Heart right ventricle (tissue), 16 donors: ENCODE measurements at regions of chr10 and their contacts with region 1.

Region 1: GRCh38 chr10:5873515-5873995 is 16.1 kb downstream of the ANKRD16 start:
- DNase-seq: peak; percentile 22 to 72
- ATAC-seq: peak in 7 of 8 donors; percentile 74 to 85 (median 79)
- H3K4me3 ChIP-seq: peak overlapping the region in 1 of 10 donors; percentile 25
- H3K27ac ChIP-seq: no peak overlapping the region
- H3K4me1 ChIP-seq: peaks cover 0 to 12% (median 0%) of the 10 kb centered on the region in 9 donors
- H3K27me3 ChIP-seq: no peaks in the 10 kb centered on the region
- CTCF ChIP-seq: peak; percentile 64 to 84 (median 77)

Region 2: GRCh38 chr10:5434017-5434753 is 439.4 kb before region 1 on chr10:
- intact Hi-C with region 1: loop called in 1 of 10 experiments (anchors 10 kb)
- DNase-seq: no peak
- ATAC-seq: peak in 3 of 8 donors; percentile 59 to 68 (median 61)
- H3K4me3 ChIP-seq: no peak overlapping the region
- H3K27ac ChIP-seq: no peak overlapping the region
- H3K4me1 ChIP-seq: no peaks in the 10 kb centered on the region
- H3K27me3 ChIP-seq: no peaks in the 10 kb centered on the region
- CTCF ChIP-seq: peak; percentile 26 to 79 (median 71)

Region 3: GRCh38 chr10:5446390-5446926 is 427.1 kb before region 1 on chr10:
- intact Hi-C with region 1: loop called in 6 of 10 experiments (anchors 5 to 10 kb)
- DNase-seq: peak; percentile 88 to 89
- ATAC-seq: peak; percentile 95 to 98 (median 97)
- H3K4me3 ChIP-seq: peak overlapping the region; percentile 5 to 64 (median 56)
- H3K27ac ChIP-seq: peak overlapping the region in 9 of 10 donors; percentile 42 to 77 (median 59)
- H3K4me1 ChIP-seq: peaks cover 0 to 43% (median 7%) of the 10 kb centered on the region in 9 donors
- H3K27me3 ChIP-seq: no peaks in the 10 kb centered on the region
- CTCF ChIP-seq: no peak

Region 4: GRCh38 chr10:5629303-5630111 is 244.0 kb before region 1 on chr10:
- intact Hi-C with region 1: loop called in 3 of 10 experiments (anchors 5 to 10 kb)
- DNase-seq: peak; percentile 83 to 87
- ATAC-seq: peak; percentile 77 to 86 (median 82)
- H3K4me3 ChIP-seq: no peak overlapping the region
- H3K27ac ChIP-seq: peak overlapping the region in 3 of 10 donors; percentile 35 to 48 (median 43)
- H3K4me1 ChIP-seq: peaks cover 0 to 44% (median 21%) of the 10 kb centered on the region in 9 donors
- H3K27me3 ChIP-seq: peaks cover 0 to 5% (median 0%) of the 10 kb centered on the region in 7 donors
- CTCF ChIP-seq: peak; percentile 85 to 97 (median 91)

Region 5: GRCh38 chr10:5684318-5684970 is 189.1 kb before region 1 on chr10 and contains the start of gene TASOR2:
- intact Hi-C with region 1: loop called in 7 of 10 experiments (anchors 2 to 10 kb)
- DNase-seq: peak; percentile 98 to 99
- ATAC-seq: peak; percentile 97 to 99 (median 98)
- H3K4me3 ChIP-seq: peak within 1 kb of the TSS; percentile 83 to 98 (median 93)
- H3K27ac ChIP-seq: peak within 1 kb of the TSS; percentile 82 to 97 (median 92)
- H3K4me1 ChIP-seq: peaks cover 9 to 32% (median 26%) of the 10 kb centered on the region in 9 donors
- H3K27me3 ChIP-seq: no peaks in the 10 kb centered on the region
- CTCF ChIP-seq: no peak
- total RNA-seq, gene TASOR2: 26.9 to 45.6 (median 34.6) TPM

Region 6: GRCh38 chr10:5692461-5693358 is 180.8 kb before region 1 on chr10:
- intact Hi-C with region 1: loop called in 7 of 10 experiments (anchors 5 to 10 kb)
- DNase-seq: peak; percentile 23 to 40
- ATAC-seq: peak; percentile 73 to 93 (median 88)
- H3K4me3 ChIP-seq: peak overlapping the region; percentile 27 to 64 (median 56)
- H3K27ac ChIP-seq: peak overlapping the region in 7 of 10 donors; percentile 21 to 77 (median 35)
- H3K4me1 ChIP-seq: peaks cover 0 to 56% (median 36%) of the 10 kb centered on the region in 9 donors
- H3K27me3 ChIP-seq: no peaks in the 10 kb centered on the region
- CTCF ChIP-seq: no peak

Region 7: DNA sequence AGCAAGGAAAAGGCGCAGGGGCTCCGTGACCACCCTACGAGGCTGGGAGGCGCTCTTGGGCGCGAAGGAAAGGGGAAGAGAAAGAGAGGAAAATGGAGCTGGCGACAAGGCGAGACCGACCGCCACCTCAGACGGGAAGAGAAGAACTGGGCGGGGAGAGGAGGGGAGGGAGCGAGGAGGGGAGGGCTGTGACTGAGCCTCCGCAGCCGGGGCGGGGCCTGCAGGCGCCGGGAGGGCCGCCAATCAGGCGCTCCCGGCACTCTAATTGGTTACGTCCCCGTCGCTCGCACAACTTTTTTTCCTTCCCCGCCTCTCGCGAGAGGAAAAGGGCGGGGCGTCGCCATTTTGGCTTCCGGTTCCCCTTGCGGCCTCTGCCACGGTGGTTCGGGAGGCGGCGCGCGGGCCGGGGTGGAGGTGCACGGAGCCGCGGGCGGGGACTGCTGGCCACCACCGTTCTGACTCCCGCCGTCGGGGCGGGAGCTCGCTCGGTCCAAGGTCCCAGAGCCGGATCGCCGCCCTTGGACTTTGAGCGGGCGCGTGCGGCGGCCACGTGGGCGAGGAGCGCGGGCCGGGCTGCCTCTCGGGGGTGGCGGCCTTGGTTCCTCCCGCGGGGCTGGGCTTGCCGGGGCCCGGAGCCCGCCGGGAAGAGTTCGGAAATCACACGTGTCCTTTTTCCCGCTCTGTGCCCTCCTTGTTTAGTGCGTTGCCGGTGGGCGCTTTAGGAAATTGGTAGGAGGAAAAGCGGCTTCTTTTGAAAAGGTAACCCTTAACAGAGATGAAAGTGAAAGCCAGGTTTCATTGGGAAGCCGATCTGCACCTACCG is 60.1 kb before region 1 on chr10 and contains the start of gene GDI2:
- intact Hi-C with region 1: loop called in 7 of 10 experiments (anchors 5 to 10 kb)
- DNase-seq: peak; percentile 96
- ATAC-seq: peak; percentile 99 to 100 (median 99)
- H3K4me3 ChIP-seq: peak within 1 kb of the TSS; percentile 67 to 96 (median 92)
- H3K27ac ChIP-seq: peak within 1 kb of the TSS; percentile 83 to 100 (median 98)
- H3K4me1 ChIP-seq: peaks cover 0 to 50% (median 47%) of the 10 kb centered on the region in 9 donors
- H3K27me3 ChIP-seq: no peaks in the 10 kb centered on the region
- CTCF ChIP-seq: peak in 1 of 9 donors; percentile 21
- total RNA-seq, gene GDI2: 89.1 to 145 (median 102) TPM

Region 8: DNA sequence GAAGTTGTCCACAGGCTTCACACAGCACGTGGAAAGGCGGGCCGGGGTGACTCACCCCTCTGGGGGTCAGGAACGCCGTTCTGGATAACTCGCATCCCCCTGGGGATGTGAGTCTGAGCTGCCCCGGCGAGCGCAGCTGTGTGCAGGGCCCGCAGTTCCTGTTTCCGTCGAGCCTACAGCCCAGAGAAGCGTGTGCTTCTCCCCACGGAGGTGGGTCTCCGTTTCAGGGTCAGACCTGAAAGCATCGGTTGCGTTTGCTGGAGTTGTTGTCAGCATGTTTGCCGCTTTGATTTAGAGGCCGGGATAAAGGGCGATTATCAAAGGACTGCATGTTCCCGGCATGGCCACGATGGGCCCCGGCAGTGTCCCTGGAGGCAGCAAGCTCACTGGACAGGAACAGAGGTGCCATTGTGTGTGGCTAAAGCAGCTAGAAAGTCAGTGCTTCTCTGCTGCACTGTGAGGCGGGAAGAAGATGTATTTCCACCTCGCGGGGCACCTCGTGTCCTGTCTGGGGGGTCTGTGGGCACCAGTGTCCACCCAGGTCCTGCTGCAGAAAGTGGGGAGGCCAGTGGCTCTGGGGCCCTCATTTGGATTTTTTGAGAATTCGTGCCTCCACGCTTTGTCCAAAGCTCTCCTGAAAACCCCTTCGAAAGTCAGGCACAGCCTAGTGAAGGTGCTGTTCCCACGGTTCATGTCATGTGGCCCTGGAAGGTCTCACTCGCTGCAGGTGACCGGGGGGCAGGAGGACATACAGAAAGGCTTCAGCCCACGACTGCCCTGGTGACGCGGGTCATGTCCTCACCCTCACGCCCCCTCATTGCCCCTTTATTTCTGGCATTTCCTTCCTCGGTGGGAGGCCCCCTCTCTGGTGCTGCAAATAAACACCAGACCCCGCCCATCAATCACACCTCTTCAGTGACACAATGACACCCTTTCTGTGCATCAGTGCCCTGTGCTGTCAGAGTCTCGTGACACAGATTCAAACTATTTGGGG is 32.9 kb before region 1 on chr10:
- intact Hi-C with region 1: no loop called
- DNase-seq: peak; percentile 22 to 50
- ATAC-seq: peak; percentile 57 to 87 (median 70)
- H3K4me3 ChIP-seq: peak overlapping the region in 3 of 10 donors; percentile 2 to 15 (median 15)
- H3K27ac ChIP-seq: peak overlapping the region in 2 of 10 donors; percentile 13 to 35
- H3K4me1 ChIP-seq: peaks cover 3 to 26% (median 10%) of the 10 kb centered on the region in 9 donors
- H3K27me3 ChIP-seq: no peaks in the 10 kb centered on the region
- CTCF ChIP-seq: no peak

Region 9: DNA sequence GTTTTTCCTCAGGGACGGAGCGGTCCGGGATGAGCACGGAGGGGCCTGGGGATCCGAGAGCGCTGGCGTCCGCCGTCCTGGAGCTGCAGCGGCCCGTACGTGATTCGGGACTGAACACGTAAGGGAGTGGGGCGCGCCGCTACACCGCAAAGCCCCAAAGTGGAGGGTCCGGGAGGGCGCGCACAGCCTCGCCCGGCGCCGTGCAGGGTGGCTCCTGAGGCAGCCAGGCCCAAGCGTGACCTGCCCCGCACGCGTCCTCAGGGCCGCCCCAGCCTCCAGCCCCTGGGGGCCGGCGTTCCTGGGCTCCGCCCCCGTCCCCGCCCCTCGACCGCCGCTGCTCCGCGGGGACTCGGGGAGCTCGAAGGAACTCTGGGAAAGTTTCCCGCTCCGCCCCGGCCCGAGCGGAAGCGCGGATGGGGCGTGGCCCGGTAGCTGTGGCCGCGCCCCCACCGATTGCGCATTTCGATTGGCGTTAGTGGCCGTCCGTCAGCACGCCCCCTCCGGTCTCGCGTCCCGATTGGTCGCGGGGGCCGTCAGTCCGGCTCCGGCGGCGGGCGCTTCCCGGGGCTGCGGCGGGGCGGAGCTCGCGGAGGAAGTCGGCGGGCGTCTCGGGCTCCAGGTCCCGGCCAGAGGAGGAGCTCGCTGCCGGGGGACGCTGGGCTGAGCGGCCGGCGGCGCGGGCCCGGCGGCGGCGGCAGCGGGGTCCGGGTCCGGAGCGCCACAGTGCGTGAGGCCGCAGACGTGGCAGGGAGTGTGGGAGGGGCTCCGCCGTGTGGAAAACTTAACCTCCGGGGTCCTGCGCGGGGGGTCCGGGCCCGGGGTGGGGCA is 16.3 kb after region 1 on chr10 and contains the starts of genes ANKRD16 and FBH1:
- intact Hi-C with region 1: no loop called
- DNase-seq: peak; percentile 99
- ATAC-seq: peak; percentile 93 to 98 (median 96)
- H3K4me3 ChIP-seq: peak within 1 kb of the TSS; percentile 66 to 98 (median 91)
- H3K27ac ChIP-seq: peak within 1 kb of the TSS; percentile 84 to 95 (median 90)
- H3K4me1 ChIP-seq: peaks cover 0 to 64% (median 52%) of the 10 kb centered on the region in 9 donors
- H3K27me3 ChIP-seq: no peaks in the 10 kb centered on the region
- CTCF ChIP-seq: peak in 2 of 9 donors; percentile 8 to 22
- total RNA-seq, gene ANKRD16: 2.2 to 3.9 (median 3.4) TPM
- total RNA-seq, gene FBH1: 57.8 to 134 (median 76.0) TPM

Region 10: GRCh38 chr10:6014241-6014761 is 140.7 kb after region 1 on chr10:
- intact Hi-C with region 1: no loop called
- DNase-seq: peak in 1 of 2 donors; percentile 75
- ATAC-seq: peak in 7 of 8 donors; percentile 23 to 63 (median 55)
- H3K4me3 ChIP-seq: peak overlapping the region in 1 of 10 donors; percentile 33
- H3K27ac ChIP-seq: peak overlapping the region in 2 of 10 donors; percentile 11 to 48
- H3K4me1 ChIP-seq: peaks cover 0 to 21% (median 8%) of the 10 kb centered on the region in 9 donors
- H3K27me3 ChIP-seq: no peaks in the 10 kb centered on the region
- CTCF ChIP-seq: peak; percentile 52 to 88 (median 79)

Region 11: GRCh38 chr10:6052247-6053221 is 179.0 kb after region 1 on chr10:
- intact Hi-C with region 1: no loop called
- DNase-seq: no peak
- ATAC-seq: no peak
- H3K4me3 ChIP-seq: no peak overlapping the region
- H3K27ac ChIP-seq: peak overlapping the region in 9 of 10 donors; percentile 29 to 89 (median 62)
- H3K4me1 ChIP-seq: peaks cover 0 to 65% (median 47%) of the 10 kb centered on the region in 9 donors
- H3K27me3 ChIP-seq: no peaks in the 10 kb centered on the region
- CTCF ChIP-seq: no peak